ENCODE measurements at regions of chr17 and their contacts with region 1.

Region 1: GRCh38 chr17:17752089-17752820 is 71.0 kb downstream of the RAI1 start:
- DNase-seq: peak; percentile 97 to 98 (median 98)
- H3K4me3 ChIP-seq: peak overlapping the region; percentile 49 to 72
- H3K4me3 Mint-ChIP-seq: peak overlapping the region; percentile 85 to 95 (median 93)
- H3K27ac ChIP-seq: peak overlapping the region; percentile 85
- H3K27ac Mint-ChIP-seq: peak overlapping the region; percentile 92 to 100 (median 98)
- H3K4me1 ChIP-seq: peaks cover 51% of the 10 kb centered on the region
- H3K4me1 Mint-ChIP-seq: peaks cover 30 to 71% (median 47%) of the 10 kb centered on the region in 4 donors
- H3K27me3 ChIP-seq: no peaks in the 10 kb centered on the region
- H3K27me3 Mint-ChIP-seq: no peaks in the 10 kb centered on the region

Region 2: DNA sequence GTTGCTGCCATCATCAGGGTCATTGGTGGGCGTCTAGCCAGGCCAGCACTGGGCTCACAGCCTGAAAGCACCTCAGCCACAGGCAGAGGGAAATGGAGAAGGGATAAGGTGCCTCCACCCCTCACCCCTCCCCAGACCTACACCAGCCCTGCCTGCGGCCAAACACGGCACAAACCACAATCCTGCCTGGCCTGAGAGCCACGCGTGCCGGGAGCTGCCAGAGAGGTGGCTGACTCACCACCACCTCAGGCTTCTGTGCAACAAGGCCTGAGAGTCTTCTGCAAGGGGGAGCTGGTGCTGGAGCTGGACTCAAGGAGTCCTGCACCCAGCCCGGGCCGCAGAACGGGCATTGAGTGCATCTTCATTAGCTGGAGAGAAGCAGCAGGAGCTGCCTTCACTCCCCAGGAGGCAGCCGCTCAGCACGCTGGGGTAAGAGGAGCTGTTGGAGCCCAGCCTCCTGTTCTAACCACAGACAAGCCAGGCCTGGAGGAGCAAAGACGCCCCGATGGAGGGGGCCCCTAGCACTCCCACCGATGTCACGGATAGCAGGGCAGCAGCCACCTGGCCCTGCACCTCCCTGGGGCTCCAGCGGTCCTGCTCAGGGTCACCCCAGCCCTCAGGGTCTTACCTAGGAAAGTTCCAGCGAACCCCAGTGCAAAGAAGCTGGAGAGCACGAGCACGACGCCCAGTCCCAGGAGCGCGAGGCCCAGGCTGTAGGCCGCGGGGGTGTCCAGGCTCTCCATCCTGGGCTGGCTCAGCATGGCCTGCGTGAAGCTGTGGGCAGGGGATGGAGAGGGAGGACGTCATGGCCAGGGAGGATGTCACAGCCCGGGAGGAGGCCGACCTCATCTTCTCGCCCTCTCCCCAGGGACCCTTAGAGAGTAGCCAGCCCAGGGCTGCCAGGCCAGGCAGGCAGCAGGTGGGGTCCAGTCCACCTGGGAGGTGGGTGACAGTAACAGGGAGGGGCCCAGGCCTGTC is 240.1 kb before region 1 on chr17:
- CTCF ChIA-PET with region 1: no interaction called
- POLR2A ChIA-PET with region 1: no interaction called
- intact Hi-C with region 1: no loop called
- DNase-seq: no peak
- H3K4me3 ChIP-seq: no peak overlapping the region
- H3K4me3 Mint-ChIP-seq: no peak overlapping the region
- H3K27ac ChIP-seq: no peak overlapping the region
- H3K27ac Mint-ChIP-seq: no peak overlapping the region
- H3K4me1 ChIP-seq: no peaks in the 10 kb centered on the region
- H3K4me1 Mint-ChIP-seq: peaks cover 0 to 10% (median 2%) of the 10 kb centered on the region in 4 donors
- H3K27me3 ChIP-seq: no peaks in the 10 kb centered on the region
- H3K27me3 Mint-ChIP-seq: no peaks in the 10 kb centered on the region

Region 3: GRCh38 chr17:17681187-17681848 is 70.9 kb before region 1 on chr17 and contains the start of gene RAI1:
- CTCF ChIA-PET with region 1: interaction called, 4 read pairs
- POLR2A ChIA-PET with region 1: interaction called, 6 read pairs
- intact Hi-C with region 1: loop called (anchors 1 kb)
- DNase-seq: peak; percentile 74 to 81 (median 78)
- H3K4me3 ChIP-seq: peak within 1 kb of the TSS in 1 of 2 donors; percentile 76
- H3K4me3 Mint-ChIP-seq: peak within 1 kb of the TSS; percentile 74 to 90 (median 88)
- H3K27ac ChIP-seq: peak within 1 kb of the TSS; percentile 71
- H3K27ac Mint-ChIP-seq: peak within 1 kb of the TSS; percentile 42 to 91 (median 86)
- H3K4me1 ChIP-seq: peaks cover 27% of the 10 kb centered on the region
- H3K4me1 Mint-ChIP-seq: peaks cover 9 to 38% (median 24%) of the 10 kb centered on the region in 4 donors
- H3K27me3 ChIP-seq: no peaks in the 10 kb centered on the region
- H3K27me3 Mint-ChIP-seq: peaks cover 0 to 5% of the 10 kb centered on the region in 2 donors
- total RNA-seq, gene RAI1: 15.4 to 19.5 TPM

Region 4: GRCh38 chr17:17783116-17783824 is 31.0 kb after region 1 on chr17:
- CTCF ChIA-PET with region 1: no interaction called
- POLR2A ChIA-PET with region 1: interaction called, 5 read pairs
- intact Hi-C with region 1: loop called (anchors 1 kb)
- DNase-seq: peak; percentile 55 to 71 (median 61)
- H3K4me3 ChIP-seq: peak overlapping the region; percentile 29 to 56
- H3K4me3 Mint-ChIP-seq: peak overlapping the region; percentile 86 to 92 (median 88)
- H3K27ac ChIP-seq: no peak overlapping the region
- H3K27ac Mint-ChIP-seq: peak overlapping the region in 3 of 7 donors; percentile 20 to 42 (median 35)
- H3K4me1 ChIP-seq: peaks cover 18% of the 10 kb centered on the region
- H3K4me1 Mint-ChIP-seq: peaks cover 5 to 23% (median 16%) of the 10 kb centered on the region in 4 donors
- H3K27me3 ChIP-seq: no peaks in the 10 kb centered on the region
- H3K27me3 Mint-ChIP-seq: no peaks in the 10 kb centered on the region

Region 5: GRCh38 chr17:17823433-17824118 is 71.3 kb after region 1 on chr17:
- CTCF ChIA-PET with region 1: no interaction called
- POLR2A ChIA-PET with region 1: interaction called, 4 read pairs
- intact Hi-C with region 1: loop called (anchors 1 kb)
- DNase-seq: peak; percentile 81 to 87 (median 85)
- H3K4me3 ChIP-seq: peak overlapping the region; percentile 38 to 53
- H3K4me3 Mint-ChIP-seq: peak overlapping the region; percentile 76 to 92 (median 81)
- H3K27ac ChIP-seq: peak overlapping the region; percentile 82
- H3K27ac Mint-ChIP-seq: peak overlapping the region; percentile 88 to 97 (median 96)
- H3K4me1 ChIP-seq: peaks cover 87% of the 10 kb centered on the region
- H3K4me1 Mint-ChIP-seq: peaks cover 41 to 96% (median 76%) of the 10 kb centered on the region in 4 donors
- H3K27me3 ChIP-seq: no peaks in the 10 kb centered on the region
- H3K27me3 Mint-ChIP-seq: no peaks in the 10 kb centered on the region

Region 6: GRCh38 chr17:17972126-17972951 is 220.1 kb after region 1 on chr17 and contains the starts of genes DRC3 and TOM1L2:
- CTCF ChIA-PET with region 1: no interaction called
- POLR2A ChIA-PET with region 1: interaction called, 7 read pairs
- intact Hi-C with region 1: loop called (anchors 1 kb)
- DNase-seq: peak; percentile 100
- H3K4me3 ChIP-seq: peak within 1 kb of the TSS; percentile 44 to 68
- H3K4me3 Mint-ChIP-seq: peak within 1 kb of the TSS; percentile 92 to 98 (median 96)
- H3K27ac ChIP-seq: peak within 1 kb of the TSS; percentile 82
- H3K27ac Mint-ChIP-seq: peak within 1 kb of the TSS; percentile 87 to 98 (median 97)
- H3K4me1 ChIP-seq: peaks cover 25% of the 10 kb centered on the region
- H3K4me1 Mint-ChIP-seq: peaks cover 23 to 51% (median 36%) of the 10 kb centered on the region in 4 donors
- H3K27me3 ChIP-seq: no peaks in the 10 kb centered on the region
- H3K27me3 Mint-ChIP-seq: no peaks in the 10 kb centered on the region
- total RNA-seq, gene DRC3: 0.64 to 0.67 TPM
- total RNA-seq, gene TOM1L2: 59.4 to 63.1 TPM

Measured in CD4-positive, alpha-beta memory T cell (primary cell).